ENCODE measurements at regions of chr11 and their contacts with region 1.

Region 1: DNA sequence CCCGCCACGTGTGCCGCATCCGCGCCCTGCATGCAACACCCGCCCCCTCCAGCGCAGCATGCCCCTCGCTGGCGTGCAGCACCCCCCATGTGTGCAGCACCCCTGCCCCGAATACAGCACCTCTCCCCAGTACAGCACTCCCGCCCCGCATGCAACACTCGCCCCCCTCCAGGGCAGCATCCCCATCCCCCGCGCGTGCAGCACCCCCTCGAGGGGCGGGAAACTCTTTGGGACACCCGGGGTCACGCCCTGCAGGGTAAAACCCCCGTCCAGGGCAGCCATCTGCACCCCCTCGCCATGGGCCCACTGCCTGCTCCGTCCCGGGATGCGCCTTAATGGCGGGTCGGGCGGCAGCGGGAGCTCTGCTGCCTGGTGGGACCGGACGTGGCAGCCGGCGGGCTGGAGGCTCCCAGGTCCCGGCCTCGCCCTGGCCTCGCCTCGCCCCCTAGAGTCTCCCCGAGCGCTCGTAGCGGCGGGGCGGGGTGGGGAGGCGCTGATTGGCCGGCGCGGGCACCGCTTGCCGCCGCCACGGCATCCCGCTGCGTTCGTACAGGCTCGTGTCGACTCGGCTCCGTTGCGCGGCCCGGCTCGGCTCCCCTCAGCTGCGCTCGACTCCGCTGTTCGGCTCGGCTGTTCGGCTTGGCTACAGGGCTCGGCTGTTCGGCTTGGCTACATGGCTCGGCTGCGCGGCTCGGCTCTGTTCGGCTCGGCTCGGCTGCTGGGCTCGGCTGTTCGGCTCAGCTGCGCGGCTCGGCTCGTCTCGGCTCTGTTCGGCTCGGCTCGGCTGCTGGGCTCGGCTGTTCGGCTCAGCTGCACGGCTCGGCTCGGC is 417 bp upstream of the BRSK2 start:
- DNase-seq: peak; percentile 94 to 98 (median 97)
- H3K4me3 ChIP-seq: peak overlapping the region; percentile 47 to 91 (median 77)
- H3K27ac ChIP-seq: peak overlapping the region in 57 of 59 donors; percentile 44 to 95 (median 86)
- H3K27me3 ChIP-seq: no peaks in the 10 kb centered on the region
- CTCF ChIP-seq: peak in 53 of 56 donors; percentile 13 to 69 (median 45)

Region 2: DNA sequence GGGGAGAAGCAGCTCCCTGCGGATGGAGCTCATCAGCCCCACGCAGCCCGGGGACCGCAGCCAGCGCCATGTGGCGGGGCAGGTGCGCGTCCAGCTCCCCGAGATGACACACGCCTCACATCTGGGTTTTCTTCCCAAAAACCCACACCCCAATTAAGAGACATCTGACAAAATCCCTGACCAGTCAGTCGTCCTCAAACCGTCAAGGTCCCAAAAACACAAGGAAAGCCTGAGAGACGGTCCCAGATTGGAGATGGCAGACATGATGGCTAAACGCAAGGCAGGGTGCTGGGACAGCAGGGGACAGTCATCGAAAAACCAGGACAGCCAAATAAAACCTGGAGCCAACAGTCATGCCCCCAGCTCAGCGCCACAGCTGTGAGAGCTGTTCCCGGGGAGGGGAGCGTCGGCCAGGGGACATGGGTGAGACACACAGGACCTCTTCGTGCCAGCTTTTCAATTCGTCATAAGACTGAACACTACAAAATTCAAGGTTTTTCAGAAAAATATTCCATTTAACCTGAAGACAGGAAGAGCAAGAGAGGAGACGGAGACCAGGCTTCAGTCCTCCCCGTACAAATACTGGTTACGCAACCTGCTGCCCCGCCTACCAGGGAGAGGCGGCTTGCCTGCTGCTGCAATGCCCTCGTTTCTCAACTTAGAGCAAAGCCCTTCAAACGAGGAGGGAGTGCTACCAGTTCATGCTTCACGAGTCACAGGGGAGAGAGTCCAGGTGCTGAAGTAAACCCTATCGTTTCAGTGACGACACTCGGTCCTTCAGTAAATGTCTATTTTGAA is 90.4 kb before region 1 on chr11:
- intact Hi-C with region 1: loop called in 1 of 2 experiments (anchors 2 kb)
- DNase-seq: peak in 8 of 10 donors; percentile 52 to 90 (median 85)
- H3K4me3 ChIP-seq: peak overlapping the region in 25 of 59 donors; percentile 1 to 44 (median 18)
- H3K27ac ChIP-seq: peak overlapping the region; percentile 8 to 98 (median 84)
- H3K27me3 ChIP-seq: no peaks in the 10 kb centered on the region
- CTCF ChIP-seq: no peak

Region 3: GRCh38 chr11:1309498-1310317 is 79.6 kb before region 1 on chr11 and contains the start of gene TOLLIP:
- intact Hi-C with region 1: loop called (anchors 1 to 2 kb)
- DNase-seq: peak; percentile 87 to 98 (median 94)
- H3K4me3 ChIP-seq: peak within 1 kb of the TSS; percentile 47 to 100 (median 90)
- H3K27ac ChIP-seq: peak within 1 kb of the TSS; percentile 56 to 99 (median 96)
- H3K27me3 ChIP-seq: no peaks in the 10 kb centered on the region
- CTCF ChIP-seq: peak; percentile 26 to 86 (median 69)
- total RNA-seq, gene TOLLIP: 129 to 348 (median 261) TPM

Region 4: DNA sequence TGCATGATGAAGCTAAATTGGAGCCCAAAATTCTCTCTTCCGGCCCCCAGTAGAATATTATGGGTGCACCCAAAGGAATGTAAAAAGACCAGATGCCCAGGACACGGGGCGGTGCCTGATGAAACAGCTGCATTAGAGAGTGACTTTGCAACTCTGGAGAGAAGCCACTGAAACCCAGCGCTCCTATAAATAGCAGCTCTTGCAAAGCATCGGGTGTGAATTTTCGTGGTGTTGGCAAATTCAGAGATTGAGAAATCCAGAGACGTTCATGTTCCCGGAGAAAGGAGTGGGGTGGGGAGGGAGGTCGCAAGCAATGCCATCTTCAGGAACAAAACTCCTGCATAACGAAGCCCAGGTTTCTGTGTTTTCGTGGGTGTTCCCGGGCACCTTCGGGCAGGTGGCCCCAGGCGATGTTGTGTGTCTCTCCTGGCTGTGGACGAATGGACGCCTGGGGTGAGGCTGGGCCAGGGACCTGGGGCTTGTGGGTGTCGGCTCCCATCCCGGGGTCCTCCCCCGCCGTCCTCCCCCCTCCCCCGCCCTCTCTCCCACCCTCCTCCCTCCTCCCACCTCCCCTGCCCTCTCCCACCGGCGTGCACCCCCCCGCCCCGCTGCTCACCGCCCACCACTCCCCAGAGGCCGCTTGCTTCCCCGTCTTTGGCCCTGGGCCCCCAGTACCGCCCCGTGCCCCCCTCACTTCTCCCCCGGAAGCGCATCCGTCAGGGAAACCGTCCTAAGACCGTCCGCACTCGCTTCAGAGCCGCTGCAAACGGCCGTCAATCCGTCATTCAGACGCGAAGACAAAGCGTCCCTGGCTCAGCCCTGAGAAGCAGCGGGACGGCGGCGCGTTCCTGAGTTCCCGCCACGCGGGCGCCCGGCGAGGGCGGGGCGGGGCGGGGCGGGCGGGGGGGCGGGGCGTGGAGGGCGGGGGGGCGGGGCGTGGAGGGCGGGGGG is 53.2 kb before region 1 on chr11:
- intact Hi-C with region 1: loop called (anchors 5 kb)
- DNase-seq: peak in 6 of 10 donors; percentile 56 to 79 (median 64)
- H3K4me3 ChIP-seq: peak overlapping the region; percentile 30 to 73 (median 57)
- H3K27ac ChIP-seq: peak overlapping the region in 48 of 59 donors; percentile 22 to 90 (median 75)
- H3K27me3 ChIP-seq: no peaks in the 10 kb centered on the region
- CTCF ChIP-seq: no peak

Region 5: GRCh38 chr11:1447845-1448825 is 58.8 kb after region 1 on chr11:
- intact Hi-C with region 1: loop called in 1 of 2 experiments (anchors 5 kb)
- DNase-seq: peak in 9 of 10 donors; percentile 55 to 76 (median 71)
- H3K4me3 ChIP-seq: no peak overlapping the region
- H3K27ac ChIP-seq: peak overlapping the region in 57 of 59 donors; percentile 11 to 84 (median 70)
- H3K27me3 ChIP-seq: no peaks in the 10 kb centered on the region
- CTCF ChIP-seq: peak in 51 of 56 donors; percentile 26 to 69 (median 50)

Measured in dorsolateral prefrontal cortex (tissue), 120 donors.